PC-3 (cell line): ENCODE measurements at regions of chr7 and their contacts with region 1.

Region 1: DNA sequence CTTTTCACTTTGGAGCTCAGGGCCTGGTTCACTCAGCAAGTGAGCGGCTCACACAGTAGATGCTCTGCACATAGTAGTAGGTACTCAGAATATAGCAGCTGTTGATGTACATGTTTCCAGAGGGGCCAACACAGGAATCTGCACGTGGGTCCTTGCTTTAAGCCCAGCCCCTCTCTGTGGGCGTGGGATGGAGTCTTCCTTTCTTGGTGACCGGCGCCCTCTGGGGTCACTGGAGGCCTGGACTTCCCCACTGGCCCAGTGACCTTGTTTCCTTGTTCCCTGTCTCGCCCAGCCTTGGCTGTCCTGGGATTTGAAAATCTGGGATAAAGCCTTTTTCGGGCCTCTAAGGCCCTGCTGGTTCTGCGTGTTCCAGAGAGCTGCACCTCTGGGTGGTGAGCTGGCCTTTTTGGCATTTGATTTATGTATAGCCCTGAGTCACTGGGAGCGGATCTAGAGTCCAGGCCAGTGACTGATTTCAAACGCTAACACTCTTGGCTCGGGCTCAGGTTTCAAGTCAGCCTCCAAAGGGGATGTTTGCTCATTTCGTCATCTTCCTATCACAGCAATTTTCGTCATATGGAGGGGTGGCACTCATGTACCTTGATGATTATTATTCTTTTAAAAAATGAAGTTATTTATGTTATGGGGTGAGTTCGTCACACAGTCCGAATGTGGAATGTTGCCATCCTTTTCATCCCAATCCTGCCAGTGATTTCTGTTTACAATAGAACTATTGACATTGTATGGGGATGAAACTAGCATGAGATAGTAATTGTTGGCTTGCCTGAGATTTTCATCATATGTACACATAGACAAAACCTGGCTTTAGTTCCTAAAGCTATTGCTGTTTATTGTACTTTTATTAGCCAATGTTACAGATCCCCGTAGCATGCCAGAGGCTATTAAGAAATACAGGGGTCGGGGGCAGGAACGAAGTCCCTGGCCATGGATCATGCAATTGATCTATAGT is 65.5 kb downstream of the CUX1 start:
- DNase-seq: peak; percentile 99
- ATAC-seq: peak; percentile 89
- H3K4me3 ChIP-seq: peak overlapping the region; percentile 40
- H3K27ac ChIP-seq: peak overlapping the region; percentile 99
- H3K4me1 ChIP-seq: peaks cover 53% of the 10 kb centered on the region
- H3K27me3 ChIP-seq: no peaks in the 10 kb centered on the region
- CTCF ChIP-seq: no peak

Region 2: GRCh38 chr7:101688183-101688831 is 194.6 kb before region 1 on chr7:
- CTCF ChIA-PET with region 1: no interaction called
- POLR2A ChIA-PET with region 1: no interaction called
- intact Hi-C with region 1: no loop called
- DNase-seq: peak; percentile 70
- ATAC-seq: peak; percentile 94
- H3K4me3 ChIP-seq: peak overlapping the region; percentile 40
- H3K27ac ChIP-seq: no peak overlapping the region
- H3K4me1 ChIP-seq: no peaks in the 10 kb centered on the region
- H3K27me3 ChIP-seq: no peaks in the 10 kb centered on the region
- CTCF ChIP-seq: peak; percentile 82

Region 3: GRCh38 chr7:101838837-101839483 is 43.9 kb before region 1 on chr7:
- CTCF ChIA-PET with region 1: no interaction called
- POLR2A ChIA-PET with region 1: no interaction called
- intact Hi-C with region 1: no loop called
- DNase-seq: no peak
- ATAC-seq: no peak
- H3K4me3 ChIP-seq: no peak overlapping the region
- H3K27ac ChIP-seq: no peak overlapping the region
- H3K4me1 ChIP-seq: no peaks in the 10 kb centered on the region
- H3K27me3 ChIP-seq: no peaks in the 10 kb centered on the region
- CTCF ChIP-seq: no peak

Region 4: GRCh38 chr7:101856473-101857357 is 26.2 kb before region 1 on chr7:
- CTCF ChIA-PET with region 1: interaction called, 6 read pairs
- POLR2A ChIA-PET with region 1: interaction called, 13 read pairs
- intact Hi-C with region 1: loop called (anchors 1 kb)
- DNase-seq: peak; percentile 94
- ATAC-seq: peak; percentile 96
- H3K4me3 ChIP-seq: peak overlapping the region; percentile 56
- H3K27ac ChIP-seq: peak overlapping the region; percentile 90
- H3K4me1 ChIP-seq: peaks cover 23% of the 10 kb centered on the region
- H3K27me3 ChIP-seq: no peaks in the 10 kb centered on the region
- CTCF ChIP-seq: peak; percentile 62

Region 5: GRCh38 chr7:101924171-101924570 is 41.3 kb after region 1 on chr7:
- CTCF ChIA-PET with region 1: interaction called, 5 read pairs
- POLR2A ChIA-PET with region 1: no interaction called
- intact Hi-C with region 1: loop called (anchors 1 kb)
- DNase-seq: peak; percentile 88
- ATAC-seq: peak; percentile 96
- H3K4me3 ChIP-seq: no peak overlapping the region; the same call in 1 of the 2 replicates
- H3K27ac ChIP-seq: peak overlapping the region; percentile 95
- H3K4me1 ChIP-seq: peaks cover 21% of the 10 kb centered on the region
- H3K27me3 ChIP-seq: no peaks in the 10 kb centered on the region
- CTCF ChIP-seq: no peak

Region 6: GRCh38 chr7:101941481-101942383 is 58.9 kb after region 1 on chr7:
- CTCF ChIA-PET with region 1: no interaction called
- POLR2A ChIA-PET with region 1: no interaction called
- intact Hi-C with region 1: loop called (anchors 2 kb)
- DNase-seq: peak; percentile 96
- ATAC-seq: peak; percentile 93
- H3K4me3 ChIP-seq: peak overlapping the region; percentile 48; the same call in 1 of the 2 replicates
- H3K27ac ChIP-seq: peak overlapping the region; percentile 98
- H3K4me1 ChIP-seq: peaks cover 37% of the 10 kb centered on the region
- H3K27me3 ChIP-seq: no peaks in the 10 kb centered on the region
- CTCF ChIP-seq: peak; percentile 41

Region 7: GRCh38 chr7:102125127-102125561 is 242.3 kb after region 1 on chr7:
- CTCF ChIA-PET with region 1: no interaction called
- POLR2A ChIA-PET with region 1: interaction called, 3 read pairs
- intact Hi-C with region 1: loop called (anchors 2 kb)
- DNase-seq: peak; percentile 91
- ATAC-seq: peak; percentile 99
- H3K4me3 ChIP-seq: no peak overlapping the region
- H3K27ac ChIP-seq: peak overlapping the region; percentile 79
- H3K4me1 ChIP-seq: peaks cover 28% of the 10 kb centered on the region
- H3K27me3 ChIP-seq: no peaks in the 10 kb centered on the region
- CTCF ChIP-seq: peak; percentile 57